H1 (cell line): ENCODE measurements at regions of chr2 and their contacts with region 1.

Region 1: DNA sequence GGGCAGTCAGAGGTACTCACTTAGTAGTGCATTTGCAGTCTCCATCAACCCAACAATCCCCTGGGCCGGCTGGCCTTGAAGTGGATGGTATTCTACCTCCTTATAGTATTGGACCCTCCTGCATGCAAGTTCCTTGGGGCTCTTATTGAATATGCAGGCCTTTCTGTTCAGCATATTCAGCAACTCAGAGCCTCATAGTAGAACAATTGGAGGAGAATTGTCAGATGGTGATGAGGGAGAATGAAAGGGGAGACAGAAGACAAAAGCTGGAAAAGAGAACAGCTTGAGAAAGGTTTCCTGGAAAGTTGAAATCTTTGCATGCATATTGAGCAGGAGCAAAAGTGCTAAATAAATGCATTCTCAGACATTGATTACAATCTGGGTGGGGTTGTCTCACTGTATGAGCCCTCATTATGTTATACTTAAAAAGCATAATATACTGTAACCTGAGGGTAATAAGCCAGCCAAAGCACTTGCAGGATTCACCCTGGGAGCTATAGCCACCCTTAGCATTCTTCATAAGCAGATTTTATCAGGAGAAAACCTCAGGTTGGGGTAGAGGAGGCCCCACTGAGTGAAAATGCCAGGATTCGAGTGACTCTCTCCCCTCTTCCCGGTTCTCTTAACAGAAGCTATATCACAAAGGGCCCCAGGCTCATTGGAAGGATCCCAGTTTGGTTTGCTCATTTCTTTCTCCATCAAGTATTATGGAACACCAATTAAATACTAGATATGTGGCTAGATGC is 178.1 kb downstream of the MSH2 start:
- DNase-seq: no peak
- H3K4me3 ChIP-seq: no peak overlapping the region
- H3K27ac ChIP-seq: no peak overlapping the region
- H3K4me1 ChIP-seq: no peaks in the 10 kb centered on the region
- H3K27me3 ChIP-seq: no peaks in the 10 kb centered on the region
- CTCF ChIP-seq: no peak
- EP300 ChIP-seq: no peak
- POLR2A ChIP-seq: no peak
- RAD21 ChIP-seq: no peak

Region 2: DNA sequence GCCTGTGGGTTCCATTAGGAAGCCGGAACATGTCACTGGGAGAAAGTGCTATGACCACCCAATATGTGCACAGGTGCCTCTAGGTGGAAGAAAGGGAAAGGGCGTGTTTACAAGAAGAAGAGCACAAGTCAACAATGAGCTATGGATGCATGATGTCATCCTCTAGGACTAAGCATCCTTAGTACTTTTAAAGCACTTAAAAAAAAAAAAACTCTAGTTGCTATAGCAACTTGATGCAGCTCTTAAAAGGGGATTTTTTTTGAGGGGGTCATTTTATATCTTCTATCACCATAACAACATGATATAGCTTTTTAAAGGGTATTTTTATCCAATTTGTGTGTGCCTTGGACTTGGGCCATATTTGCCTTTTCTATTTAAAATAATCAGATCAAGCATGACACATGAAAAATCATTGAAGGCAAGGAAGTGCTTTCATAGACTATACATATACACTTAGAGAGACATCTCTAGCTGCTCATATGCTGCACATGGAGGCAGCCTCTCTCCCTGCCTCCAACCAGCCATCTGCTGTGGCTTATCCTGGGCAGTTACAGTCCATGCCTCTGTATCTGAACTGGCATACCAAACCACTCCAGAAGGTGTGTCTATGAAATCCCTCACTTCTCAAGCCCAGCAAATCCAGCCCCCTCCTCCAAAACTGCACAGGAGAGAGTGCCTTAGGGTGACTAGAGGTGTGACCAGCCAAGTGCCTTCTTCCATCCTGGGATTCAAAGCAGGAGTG is 12.7 kb before region 1 on chr2:
- CTCF ChIA-PET with region 1: interaction called, 12 read pairs
- POLR2A ChIA-PET with region 1: no interaction called
- DNase-seq: no peak
- H3K4me3 ChIP-seq: peak overlapping the region; percentile 57 to 64 (median 61); a peak in 4 of 8 replicates
- H3K27ac ChIP-seq: no peak overlapping the region
- H3K4me1 ChIP-seq: peaks cover 2 to 18% (median 7%) of the 10 kb centered on the region in 4 experiments; a peak in 5 of 7 replicates
- H3K27me3 ChIP-seq: peaks cover 8 to 36% (median 29%) of the 10 kb centered on the region in 4 experiments
- CTCF ChIP-seq: no peak
- EP300 ChIP-seq: no peak
- POLR2A ChIP-seq: no peak
- RAD21 ChIP-seq: no peak

Region 3: DNA sequence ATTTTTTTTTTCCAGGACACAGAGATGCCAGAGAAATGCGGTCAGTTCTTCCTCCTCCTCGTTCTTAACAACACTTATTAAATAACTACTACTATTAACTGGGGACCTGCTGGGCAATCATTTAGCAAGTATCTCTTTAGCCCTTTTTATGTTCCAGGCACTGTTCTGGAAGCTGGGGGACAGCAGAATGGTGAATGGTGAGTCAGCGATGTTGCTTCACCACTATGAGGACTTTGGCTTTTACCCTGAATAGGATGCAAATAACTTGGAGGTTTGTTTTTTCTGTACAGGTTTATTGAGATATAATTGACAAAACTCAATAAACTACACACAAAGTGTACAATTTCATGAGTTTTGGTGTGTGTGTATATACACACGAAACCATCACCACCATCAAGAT is 22.0 kb after region 1 on chr2:
- CTCF ChIA-PET with region 1: no interaction called
- POLR2A ChIA-PET with region 1: no interaction called
- DNase-seq: no peak
- H3K4me3 ChIP-seq: no peak overlapping the region
- H3K27ac ChIP-seq: no peak overlapping the region
- H3K4me1 ChIP-seq: peaks cover 2 to 10% (median 8%) of the 10 kb centered on the region in 4 experiments; a peak in 6 of 7 replicates
- H3K27me3 ChIP-seq: no peaks in the 10 kb centered on the region
- CTCF ChIP-seq: no peak
- EP300 ChIP-seq: no peak
- POLR2A ChIP-seq: no peak
- RAD21 ChIP-seq: no peak